MCF 10A (cell line): ENCODE measurements at regions of chr1 and their contacts with region 1.

Region 1: DNA sequence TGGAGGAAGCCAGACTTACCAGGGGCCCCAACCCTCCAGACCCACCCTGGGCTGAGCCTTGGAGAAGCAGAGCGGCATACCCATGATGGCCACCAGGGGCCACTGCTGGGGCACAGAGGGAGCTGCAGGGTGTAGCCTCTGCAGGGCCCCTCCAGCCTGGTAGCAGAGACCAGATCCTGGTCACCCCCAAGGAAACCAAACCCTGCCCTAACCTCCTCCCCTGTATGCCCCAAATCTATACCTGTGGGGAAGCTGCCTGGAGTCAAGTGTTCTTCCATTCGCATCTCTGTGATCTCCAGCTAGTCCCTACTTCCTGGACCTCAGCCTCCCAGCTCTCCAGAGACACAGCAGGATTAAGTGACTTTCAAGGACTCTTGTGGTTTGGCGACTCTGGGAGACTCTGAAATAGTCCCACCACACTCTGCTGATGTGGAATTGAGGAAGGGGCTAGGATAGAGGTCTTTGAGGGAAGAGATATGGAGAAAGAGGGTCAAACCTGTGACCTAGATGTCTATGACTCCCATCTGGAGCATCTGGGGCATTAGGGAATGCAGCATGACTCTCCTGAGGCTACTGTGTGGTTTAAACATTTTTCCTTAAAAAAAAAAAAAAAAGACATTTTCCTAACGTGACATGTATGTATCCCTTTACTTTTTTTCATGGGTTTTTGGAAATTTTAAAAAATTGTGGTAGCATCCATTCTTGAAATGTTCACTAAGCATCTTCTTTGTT is 119.2 kb upstream of the IPO9 start:
- DNase-seq: peak; percentile 87
- H3K4me3 Mint-ChIP-seq: no peak overlapping the region
- H3K27ac Mint-ChIP-seq: no peak overlapping the region
- H3K4me1 Mint-ChIP-seq: peaks cover 52% of the 10 kb centered on the region
- H3K27me3 Mint-ChIP-seq: no peaks in the 10 kb centered on the region
- CTCF ChIP-seq: peak; percentile 100

Region 2: DNA sequence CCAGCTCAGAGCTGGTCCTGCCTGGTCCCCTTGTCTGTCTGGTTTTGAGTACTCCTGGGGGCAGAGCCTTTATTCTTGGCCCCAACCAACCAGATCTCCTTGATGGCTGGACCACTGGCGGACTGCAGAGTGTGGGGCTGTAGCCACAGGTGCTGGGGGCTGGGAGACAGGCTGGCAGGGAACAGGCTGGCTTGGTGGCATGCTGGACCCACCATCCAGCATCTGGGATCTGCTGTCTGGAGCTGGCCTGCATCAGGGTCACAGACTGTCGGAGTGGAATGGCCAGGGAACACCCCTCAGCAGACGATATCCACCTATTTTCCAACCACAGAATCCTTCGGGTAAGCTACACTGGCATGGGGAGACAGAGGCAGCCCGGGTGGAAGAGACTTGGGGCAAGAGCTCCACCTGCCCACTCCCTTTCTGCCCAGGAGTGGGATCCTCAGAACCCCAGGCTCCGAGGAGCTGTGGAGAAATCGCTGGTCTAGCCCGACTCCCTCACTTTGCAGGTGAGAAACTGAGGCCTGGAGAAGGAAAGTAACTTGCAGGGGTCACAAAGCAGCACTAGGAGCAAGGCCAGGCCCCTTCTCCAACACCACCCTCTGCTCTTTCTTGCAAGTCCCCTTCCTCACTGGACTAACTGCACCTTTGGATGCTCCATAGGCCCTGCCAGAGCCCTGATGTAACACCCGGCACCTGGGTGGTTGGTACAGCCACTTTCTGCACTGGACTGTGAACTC is 372.8 kb before region 1 on chr1:
- CTCF ChIA-PET with region 1: no interaction called
- POLR2A ChIA-PET with region 1: no interaction called
- intact Hi-C with region 1: no loop called
- DNase-seq: no peak
- H3K4me3 Mint-ChIP-seq: no peak overlapping the region
- H3K27ac Mint-ChIP-seq: no peak overlapping the region
- H3K4me1 Mint-ChIP-seq: peaks cover 6% of the 10 kb centered on the region
- H3K27me3 Mint-ChIP-seq: no peaks in the 10 kb centered on the region
- CTCF ChIP-seq: no peak

Region 3: GRCh38 chr1:201481761-201482493 is 227.8 kb before region 1 on chr1:
- CTCF ChIA-PET with region 1: interaction called, 25 read pairs
- POLR2A ChIA-PET with region 1: interaction called, 5 read pairs
- intact Hi-C with region 1: loop called (anchors 2 kb)
- DNase-seq: peak; percentile 94
- H3K4me3 Mint-ChIP-seq: peak overlapping the region; percentile 0
- H3K27ac Mint-ChIP-seq: no peak overlapping the region
- H3K4me1 Mint-ChIP-seq: peaks cover 33% of the 10 kb centered on the region
- H3K27me3 Mint-ChIP-seq: no peaks in the 10 kb centered on the region
- CTCF ChIP-seq: peak; percentile 100

Region 4: GRCh38 chr1:201582705-201583442 is 126.9 kb before region 1 on chr1:
- CTCF ChIA-PET with region 1: interaction called, 39 read pairs
- POLR2A ChIA-PET with region 1: no interaction called
- intact Hi-C with region 1: no loop called
- DNase-seq: peak; percentile 60
- H3K4me3 Mint-ChIP-seq: no peak overlapping the region
- H3K27ac Mint-ChIP-seq: no peak overlapping the region
- H3K4me1 Mint-ChIP-seq: peaks cover 28% of the 10 kb centered on the region
- H3K27me3 Mint-ChIP-seq: peaks cover 12% of the 10 kb centered on the region
- CTCF ChIP-seq: no peak

Region 5: DNA sequence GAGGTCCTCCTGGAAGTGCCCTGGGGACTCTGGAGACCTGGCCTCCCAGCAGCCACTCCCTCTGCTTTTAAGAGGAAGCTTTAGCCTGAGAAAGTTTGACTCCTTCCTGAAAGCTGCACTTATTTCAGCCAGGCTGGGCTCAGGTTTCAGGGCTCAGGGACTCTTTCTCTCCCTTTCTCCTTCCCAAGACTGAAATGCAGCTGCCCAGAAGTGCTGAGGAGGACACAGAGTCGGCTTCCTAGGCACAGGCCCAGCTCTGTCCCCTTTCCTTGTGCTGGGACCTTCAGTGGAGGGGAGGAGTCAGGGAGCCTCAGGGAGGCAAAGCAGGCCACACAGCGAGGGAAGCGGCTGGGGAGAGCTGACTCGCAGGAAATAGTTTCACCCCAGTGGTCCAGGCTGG is 33.5 kb before region 1 on chr1:
- CTCF ChIA-PET with region 1: interaction called, 15 read pairs
- POLR2A ChIA-PET with region 1: no interaction called
- intact Hi-C with region 1: no loop called
- DNase-seq: peak; percentile 42
- H3K4me3 Mint-ChIP-seq: no peak overlapping the region
- H3K27ac Mint-ChIP-seq: no peak overlapping the region
- H3K4me1 Mint-ChIP-seq: peaks cover 6% of the 10 kb centered on the region
- H3K27me3 Mint-ChIP-seq: no peaks in the 10 kb centered on the region
- CTCF ChIP-seq: no peak

Region 6: GRCh38 chr1:201750939-201751338 is 41.2 kb after region 1 on chr1:
- CTCF ChIA-PET with region 1: interaction called, 1,744 read pairs
- POLR2A ChIA-PET with region 1: interaction called, 163 read pairs
- intact Hi-C with region 1: loop called (anchors 5 kb)
- DNase-seq: peak; percentile 83
- H3K4me3 Mint-ChIP-seq: peak overlapping the region; percentile 17
- H3K27ac Mint-ChIP-seq: peak overlapping the region; percentile 80
- H3K4me1 Mint-ChIP-seq: peaks cover 71% of the 10 kb centered on the region
- H3K27me3 Mint-ChIP-seq: no peaks in the 10 kb centered on the region
- CTCF ChIP-seq: no peak

Region 7: DNA sequence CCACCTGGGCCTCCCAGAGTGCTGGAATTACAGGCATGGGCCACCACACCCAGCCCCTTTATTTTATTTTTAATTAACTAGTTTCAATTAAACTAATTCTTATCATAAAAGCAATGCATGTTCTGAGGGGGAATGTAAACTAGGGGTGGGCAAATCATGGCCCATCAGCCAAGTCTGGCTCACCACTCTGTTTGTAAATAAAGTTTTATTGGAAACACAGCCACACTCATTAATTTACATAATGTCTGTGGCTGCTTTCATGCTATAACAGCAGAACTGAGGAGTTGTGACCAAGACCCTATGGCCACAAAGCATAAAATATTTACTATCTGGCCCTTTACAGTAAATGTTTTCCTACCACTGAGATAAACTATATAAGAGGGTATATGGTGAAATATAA is 90.5 kb after region 1 on chr1:
- CTCF ChIA-PET with region 1: interaction called, 1,744 read pairs
- POLR2A ChIA-PET with region 1: interaction called, 168 read pairs
- intact Hi-C with region 1: no loop called
- DNase-seq: no peak
- H3K4me3 Mint-ChIP-seq: no peak overlapping the region
- H3K27ac Mint-ChIP-seq: no peak overlapping the region
- H3K4me1 Mint-ChIP-seq: no peaks in the 10 kb centered on the region
- H3K27me3 Mint-ChIP-seq: no peaks in the 10 kb centered on the region
- CTCF ChIP-seq: no peak

Region 8: GRCh38 chr1:201888282-201889089 is 178.8 kb after region 1 on chr1 and contains the start of gene SHISA4:
- CTCF ChIA-PET with region 1: no interaction called
- POLR2A ChIA-PET with region 1: no interaction called
- intact Hi-C with region 1: loop called (anchors 10 kb)
- DNase-seq: peak; percentile 77
- H3K4me3 Mint-ChIP-seq: peak within 1 kb of the TSS; percentile 77
- H3K27ac Mint-ChIP-seq: peak within 1 kb of the TSS; percentile 21
- H3K4me1 Mint-ChIP-seq: peaks cover 21% of the 10 kb centered on the region
- H3K27me3 Mint-ChIP-seq: no peaks in the 10 kb centered on the region
- CTCF ChIP-seq: no peak
- total RNA-seq, gene SHISA4: 7.6 and 20.9 TPM in 2 replicates